Psoas muscle (tissue), 8 donors: ENCODE measurements at regions of chr16 and their contacts with region 1.

Region 1: DNA sequence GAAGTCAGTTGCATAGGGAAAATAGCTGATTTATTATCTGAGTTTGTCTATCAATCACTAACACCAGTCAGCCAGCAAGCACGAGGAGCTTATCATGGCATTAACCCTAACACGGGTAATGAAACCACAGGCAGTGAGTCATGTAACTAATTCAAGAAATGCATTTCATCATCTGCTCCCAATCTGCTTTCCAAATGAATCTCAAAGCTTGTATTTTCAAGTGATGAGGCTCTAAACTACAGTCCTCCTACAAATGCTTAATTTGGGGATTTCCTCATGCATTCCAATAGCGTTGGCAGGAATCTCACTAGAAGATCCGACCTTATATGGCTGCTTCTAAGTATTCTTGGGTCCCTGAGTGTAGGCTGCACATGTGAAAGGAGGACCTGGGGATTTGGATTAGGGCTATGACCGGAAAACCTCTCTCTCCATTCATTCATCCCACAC is 118.4 kb upstream of the HSBP1 start:
- DNase-seq: no peak
- ATAC-seq: peak; percentile 90 to 98 (median 95)
- H3K4me3 ChIP-seq: no peak overlapping the region
- H3K27ac ChIP-seq: peak overlapping the region; percentile 63
- H3K4me1 ChIP-seq: peaks cover 30% of the 10 kb centered on the region
- H3K27me3 ChIP-seq: no peaks in the 10 kb centered on the region
- CTCF ChIP-seq: no peak

Region 2: DNA sequence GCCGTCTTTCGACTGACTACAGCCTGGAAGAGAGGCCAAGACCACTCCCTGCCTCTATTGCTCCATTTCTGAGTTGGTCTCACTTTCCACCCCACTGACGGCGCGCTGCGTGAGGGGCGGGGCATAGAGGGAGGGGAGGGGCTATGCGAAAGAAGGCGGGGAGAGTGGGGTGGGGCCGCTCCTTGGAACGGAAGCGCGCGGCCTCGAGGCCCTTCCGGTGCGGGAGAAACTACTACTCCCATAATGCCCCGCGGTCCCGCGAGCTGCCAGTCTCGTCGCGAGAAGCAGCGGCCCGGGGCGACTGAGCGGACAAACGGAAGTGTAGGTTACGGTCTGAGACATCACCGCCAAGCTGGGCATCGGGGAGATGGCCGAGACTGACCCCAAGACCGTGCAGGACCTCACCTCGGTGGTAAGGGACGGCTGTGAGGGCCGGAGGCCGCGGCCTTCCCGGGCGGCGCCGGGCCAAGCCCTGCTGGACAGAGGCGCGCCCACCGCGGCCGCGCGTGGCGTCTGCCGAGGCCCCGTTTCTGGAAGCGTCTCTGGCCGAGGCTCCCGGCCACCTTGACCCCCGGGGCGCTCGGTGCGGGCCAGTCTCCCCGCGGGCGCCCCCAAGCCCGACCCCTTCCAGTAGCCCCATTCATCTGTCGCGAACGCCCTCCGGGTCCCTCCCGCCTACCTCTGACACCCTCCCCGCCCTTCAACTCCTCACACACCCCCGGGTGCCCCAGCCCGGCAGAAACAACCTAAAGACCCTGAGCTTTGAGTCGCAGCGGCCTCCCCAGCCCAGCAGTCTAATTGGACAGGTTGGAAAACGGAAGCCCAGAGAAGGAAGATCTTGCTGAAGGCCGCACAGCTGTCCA is 118.5 kb after region 1 on chr16 and contains the start of gene HSBP1:
- intact Hi-C with region 1: loop called in 1 of 2 experiments (anchors 10 kb)
- DNase-seq: peak; percentile 97 to 98
- ATAC-seq: peak; percentile 98 to 99 (median 99)
- H3K4me3 ChIP-seq: peak within 1 kb of the TSS; percentile 99
- H3K27ac ChIP-seq: peak within 1 kb of the TSS; percentile 83
- H3K4me1 ChIP-seq: peaks cover 8% of the 10 kb centered on the region
- H3K27me3 ChIP-seq: no peaks in the 10 kb centered on the region
- CTCF ChIP-seq: no peak
- total RNA-seq, gene HSBP1: 71.7 to 109 (median 91.1) TPM